GM23248 (cell line): ENCODE measurements at regions of chrX and their contacts with region 1.

Region 1: DNA sequence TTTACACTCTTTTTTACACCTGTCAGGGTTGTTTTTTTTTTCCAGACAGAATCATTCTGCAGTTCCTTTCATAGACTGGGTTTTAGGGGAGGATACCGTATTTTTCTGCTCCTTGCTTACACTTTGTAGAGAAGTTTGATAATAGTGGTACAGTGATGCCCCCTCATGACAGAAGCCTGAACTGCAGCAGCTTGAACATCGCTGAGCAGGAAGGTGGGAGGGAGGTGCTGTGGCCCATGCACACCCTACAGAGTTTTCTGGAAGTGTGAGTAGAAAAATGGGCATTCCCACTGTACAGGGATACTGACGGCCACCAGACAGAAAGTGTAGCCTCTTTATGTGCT is 54.5 kb downstream of the RAB40A start:
- DNase-seq: peak; percentile 66
- H3K4me3 ChIP-seq: no peak overlapping the region
- H3K27ac ChIP-seq: no peak overlapping the region
- H3K4me1 ChIP-seq: no peaks in the 10 kb centered on the region; the same call in 1 of the 2 replicates
- H3K27me3 ChIP-seq: no peaks in the 10 kb centered on the region

Region 2: GRCh38 chrX:103214870-103215424 is 249.8 kb before region 1 on chrX and contains the start of gene BEX4:
- in situ Hi-C with region 1: loop called (anchors 25 kb)
- DNase-seq: peak; percentile 71
- H3K4me3 ChIP-seq: peak within 1 kb of the TSS; percentile 65
- H3K27ac ChIP-seq: no peak within 1 kb of the TSS
- H3K4me1 ChIP-seq: no peaks in the 10 kb centered on the region
- H3K27me3 ChIP-seq: no peaks in the 10 kb centered on the region
- total RNA-seq, gene BEX4: 0.54 and 2.4 TPM in 2 replicates

Region 3: DNA sequence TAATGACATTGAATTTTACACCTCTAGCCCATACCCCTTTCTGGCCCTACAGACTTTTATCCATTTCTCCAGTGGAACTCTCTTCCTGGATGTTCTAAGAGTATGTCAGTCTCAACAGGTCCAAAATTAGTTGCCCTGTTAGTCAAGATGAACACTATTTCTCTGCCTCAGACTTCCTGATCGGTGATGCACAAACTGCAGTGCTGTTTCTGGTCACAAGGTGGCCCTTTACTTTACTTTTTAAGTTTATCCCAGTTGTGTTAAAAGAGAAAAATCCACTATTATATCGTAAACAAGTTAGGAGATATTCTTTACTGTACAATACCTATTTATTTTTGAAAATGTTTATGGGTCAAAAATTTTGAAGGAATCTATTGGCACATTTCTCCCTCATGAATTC is 121.6 kb before region 1 on chrX:
- in situ Hi-C with region 1: loop called (anchors 10 kb)
- DNase-seq: peak; percentile 59
- H3K4me3 ChIP-seq: no peak overlapping the region
- H3K27ac ChIP-seq: no peak overlapping the region
- H3K4me1 ChIP-seq: no peaks in the 10 kb centered on the region
- H3K27me3 ChIP-seq: no peaks in the 10 kb centered on the region

Region 4: DNA sequence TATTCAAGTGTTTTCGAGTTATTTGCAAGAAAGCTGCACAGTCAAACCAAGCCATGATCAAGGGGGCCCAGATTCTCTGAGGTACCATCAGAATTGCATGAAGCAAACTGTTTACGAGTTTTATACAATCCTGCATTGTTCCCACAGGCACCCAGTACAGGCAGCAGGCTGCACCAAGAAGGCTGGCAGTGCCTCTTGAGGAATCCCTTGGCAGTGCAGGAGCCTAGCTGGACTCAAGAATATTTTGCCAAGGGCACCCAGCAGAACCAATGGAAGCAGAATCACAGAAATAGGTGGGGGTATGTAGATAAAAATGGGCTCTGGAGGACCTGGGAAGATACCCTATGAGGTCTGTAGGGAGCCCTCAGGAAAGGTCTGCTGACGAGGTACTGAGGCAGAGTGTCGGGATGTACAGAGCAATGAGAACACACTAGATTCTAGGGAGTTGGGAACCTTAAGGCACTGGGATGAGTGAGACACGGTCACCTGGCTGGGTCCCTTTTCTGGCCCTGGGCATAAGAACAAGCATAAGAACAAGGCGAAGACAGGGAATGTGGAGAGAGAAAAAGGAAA is 309.4 kb after region 1 on chrX:
- in situ Hi-C with region 1: no loop called
- DNase-seq: peak; percentile 75
- H3K4me3 ChIP-seq: no peak overlapping the region
- H3K27ac ChIP-seq: no peak overlapping the region
- H3K4me1 ChIP-seq: no peaks in the 10 kb centered on the region
- H3K27me3 ChIP-seq: no peaks in the 10 kb centered on the region